ENCODE measurements at regions of chr11 and their contacts with region 1.

Region 1: GRCh38 chr11:66408488-66409214 is 12.2 kb upstream of the NPAS4 start:
- DNase-seq: peak; percentile 88
- ATAC-seq: peak; percentile 92
- H3K4me3 Mint-ChIP-seq: peak overlapping the region; percentile 73
- H3K27ac Mint-ChIP-seq: no peak overlapping the region
- H3K4me1 Mint-ChIP-seq: peaks cover 4% of the 10 kb centered on the region
- H3K27me3 Mint-ChIP-seq: peaks cover 44% of the 10 kb centered on the region
- CTCF ChIP-seq: peak; percentile 96

Region 2: GRCh38 chr11:66363805-66364535 is 44.7 kb before region 1 on chr11:
- CTCF ChIA-PET with region 1: no interaction called
- POLR2A ChIA-PET with region 1: no interaction called
- intact Hi-C with region 1: no loop called
- DNase-seq: peak; percentile 45
- ATAC-seq: peak; percentile 64
- H3K4me3 Mint-ChIP-seq: no peak overlapping the region
- H3K27ac Mint-ChIP-seq: no peak overlapping the region
- H3K4me1 Mint-ChIP-seq: no peaks in the 10 kb centered on the region
- H3K27me3 Mint-ChIP-seq: no peaks in the 10 kb centered on the region
- CTCF ChIP-seq: no peak

Region 3: GRCh38 chr11:66421492-66422205 is 13.0 kb after region 1 on chr11:
- CTCF ChIA-PET with region 1: interaction called, 10 read pairs
- POLR2A ChIA-PET with region 1: interaction called, 4 read pairs
- intact Hi-C with region 1: no loop called
- DNase-seq: peak; percentile 83
- ATAC-seq: peak; percentile 92
- H3K4me3 Mint-ChIP-seq: no peak overlapping the region
- H3K27ac Mint-ChIP-seq: no peak overlapping the region
- H3K4me1 Mint-ChIP-seq: peaks cover 9% of the 10 kb centered on the region
- H3K27me3 Mint-ChIP-seq: peaks cover 29% of the 10 kb centered on the region
- CTCF ChIP-seq: no peak

Region 4: GRCh38 chr11:66438504-66439466 is 30.1 kb after region 1 on chr11 and contains the start of gene MRPL11:
- CTCF ChIA-PET with region 1: interaction called, 9 read pairs
- POLR2A ChIA-PET with region 1: interaction called, 5 read pairs
- intact Hi-C with region 1: loop called (anchors 1 kb)
- DNase-seq: peak; percentile 78
- ATAC-seq: peak; percentile 98
- H3K4me3 Mint-ChIP-seq: peak within 1 kb of the TSS; percentile 87
- H3K27ac Mint-ChIP-seq: peak within 1 kb of the TSS; percentile 97
- H3K4me1 Mint-ChIP-seq: peaks cover 8% of the 10 kb centered on the region
- H3K27me3 Mint-ChIP-seq: peaks cover 4% of the 10 kb centered on the region
- CTCF ChIP-seq: no peak
- total RNA-seq, gene MRPL11: 62.6 and 74.3 TPM in 2 replicates

Region 5: GRCh38 chr11:66579017-66579606 is 170.5 kb after region 1 on chr11:
- CTCF ChIA-PET with region 1: no interaction called
- POLR2A ChIA-PET with region 1: no interaction called
- intact Hi-C with region 1: loop called (anchors 1 kb)
- DNase-seq: peak; percentile 76
- ATAC-seq: peak; percentile 88
- H3K4me3 Mint-ChIP-seq: no peak overlapping the region
- H3K27ac Mint-ChIP-seq: no peak overlapping the region
- H3K4me1 Mint-ChIP-seq: peaks cover 7% of the 10 kb centered on the region
- H3K27me3 Mint-ChIP-seq: peaks cover 13% of the 10 kb centered on the region
- CTCF ChIP-seq: peak; percentile 42

Region 6: GRCh38 chr11:66883016-66883968 is 474.6 kb after region 1 on chr11:
- CTCF ChIA-PET with region 1: no interaction called
- POLR2A ChIA-PET with region 1: no interaction called
- intact Hi-C with region 1: loop called (anchors 2 kb)
- DNase-seq: peak; percentile 54
- ATAC-seq: peak; percentile 62
- H3K4me3 Mint-ChIP-seq: no peak overlapping the region
- H3K27ac Mint-ChIP-seq: no peak overlapping the region
- H3K4me1 Mint-ChIP-seq: no peaks in the 10 kb centered on the region
- H3K27me3 Mint-ChIP-seq: peaks cover 3% of the 10 kb centered on the region
- CTCF ChIP-seq: no peak

Measured in activated B cell treated with CpG ODN at 0.5 μM for 24 hours (primary cell).